ENCODE measurements at regions of chr2 and their contacts with region 1.

Region 1: DNA sequence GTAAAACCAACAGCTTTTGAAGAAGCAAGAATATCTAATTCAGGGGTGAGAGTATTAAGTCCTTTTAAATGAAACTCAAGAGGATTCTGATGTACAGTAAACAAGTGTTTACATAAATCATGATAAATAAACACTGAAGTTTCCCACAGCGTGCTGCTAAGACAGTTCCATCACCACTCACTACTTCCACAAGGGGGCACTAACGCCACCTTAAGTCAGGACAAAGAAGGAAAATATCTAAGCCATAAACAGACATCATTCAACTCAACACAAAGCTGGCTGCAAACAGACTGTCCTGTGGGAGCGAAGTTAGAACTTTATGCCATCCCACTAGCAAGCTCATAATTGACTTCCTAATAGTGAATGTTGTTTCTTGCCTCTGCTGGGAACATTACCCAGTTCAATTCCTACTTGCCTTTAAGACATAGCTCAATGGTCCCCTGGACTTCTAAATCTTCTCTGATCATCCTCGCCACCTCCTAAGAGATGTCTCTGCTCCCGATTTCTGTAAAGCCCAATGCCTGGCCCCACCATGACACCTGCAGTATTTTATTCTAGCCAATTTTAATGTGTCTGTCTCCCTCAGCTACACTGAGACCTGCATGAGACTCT is 36.5 kb downstream of the MRPL44 start:
- DNase-seq: peak; percentile 65 to 88
- ATAC-seq: peak; percentile 83 to 90
- H3K4me3 ChIP-seq: no peak overlapping the region
- H3K27ac ChIP-seq: peak overlapping the region in 1 of 2 experiments; percentile 2; a peak in 1 of 6 replicates
- H3K4me1 ChIP-seq: peaks cover 19% of the 10 kb centered on the region; the same call in 2 of the 3 replicates
- CTCF ChIP-seq: peak; percentile 85
- EP300 ChIP-seq: no peak
- POLR2A ChIP-seq: no peak
- RAD21 ChIP-seq: peak; percentile 92 to 94

Region 2: DNA sequence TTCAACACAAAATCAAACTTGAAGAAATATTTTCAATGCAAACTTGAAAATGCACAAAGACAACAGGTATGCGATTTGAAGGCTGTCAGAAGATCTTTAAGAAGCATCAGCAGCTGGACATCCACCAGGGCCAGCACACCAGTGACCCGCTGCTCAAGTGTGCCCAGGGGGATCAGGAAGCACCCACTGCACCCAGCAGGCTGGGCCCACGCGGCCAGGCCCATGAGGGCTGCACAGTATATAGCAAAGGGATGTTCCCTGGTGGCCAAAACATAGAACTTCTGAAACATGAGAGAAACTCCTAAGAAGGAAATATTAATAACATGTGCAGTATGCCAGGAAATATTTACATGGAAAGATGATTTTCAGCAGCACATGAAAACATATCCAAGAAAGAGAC is 73.6 kb before region 1 on chr2:
- CTCF ChIA-PET with region 1: no interaction called
- POLR2A ChIA-PET with region 1: no interaction called
- DNase-seq: no peak
- ATAC-seq: peak; percentile 24 to 78; a peak in 3 of 6 replicates
- H3K4me3 ChIP-seq: no peak overlapping the region
- H3K27ac ChIP-seq: no peak overlapping the region
- H3K4me1 ChIP-seq: 0 out of 3 replicates have a peak, but pooled peaks cover 6% of the 10 kb centered on the region
- CTCF ChIP-seq: no peak
- EP300 ChIP-seq: no peak
- POLR2A ChIP-seq: no peak
- RAD21 ChIP-seq: no peak

Region 3: GRCh38 chr2:224004105-224004695 is 10.5 kb after region 1 on chr2:
- CTCF ChIA-PET with region 1: interaction called, 54 read pairs
- POLR2A ChIA-PET with region 1: no interaction called
- DNase-seq: no peak
- ATAC-seq: no peak
- H3K4me3 ChIP-seq: no peak overlapping the region
- H3K27ac ChIP-seq: no peak overlapping the region
- H3K4me1 ChIP-seq: peaks cover 14% of the 10 kb centered on the region
- CTCF ChIP-seq: no peak
- EP300 ChIP-seq: no peak
- POLR2A ChIP-seq: no peak
- RAD21 ChIP-seq: no peak

Region 4: GRCh38 chr2:224033601-224034000 is 39.9 kb after region 1 on chr2:
- CTCF ChIA-PET with region 1: interaction called, 20 read pairs
- POLR2A ChIA-PET with region 1: interaction called, 12 read pairs
- DNase-seq: no peak
- ATAC-seq: no peak
- H3K4me3 ChIP-seq: no peak overlapping the region
- H3K27ac ChIP-seq: no peak overlapping the region
- H3K4me1 ChIP-seq: peaks cover 23% of the 10 kb centered on the region
- CTCF ChIP-seq: no peak
- EP300 ChIP-seq: no peak
- POLR2A ChIP-seq: no peak
- RAD21 ChIP-seq: no peak

Region 5: GRCh38 chr2:224062481-224063297 is 69.0 kb after region 1 on chr2:
- CTCF ChIA-PET with region 1: interaction called, 23 read pairs
- POLR2A ChIA-PET with region 1: no interaction called
- DNase-seq: no peak
- ATAC-seq: no peak
- H3K4me3 ChIP-seq: no peak overlapping the region
- H3K27ac ChIP-seq: no peak overlapping the region
- H3K4me1 ChIP-seq: no peaks in the 10 kb centered on the region
- CTCF ChIP-seq: no peak
- EP300 ChIP-seq: no peak
- POLR2A ChIP-seq: no peak
- RAD21 ChIP-seq: 0 out of 5 replicates have a peak, but pooled peaks of 1 of the 2 experiments have one; percentile 11

Region 6: DNA sequence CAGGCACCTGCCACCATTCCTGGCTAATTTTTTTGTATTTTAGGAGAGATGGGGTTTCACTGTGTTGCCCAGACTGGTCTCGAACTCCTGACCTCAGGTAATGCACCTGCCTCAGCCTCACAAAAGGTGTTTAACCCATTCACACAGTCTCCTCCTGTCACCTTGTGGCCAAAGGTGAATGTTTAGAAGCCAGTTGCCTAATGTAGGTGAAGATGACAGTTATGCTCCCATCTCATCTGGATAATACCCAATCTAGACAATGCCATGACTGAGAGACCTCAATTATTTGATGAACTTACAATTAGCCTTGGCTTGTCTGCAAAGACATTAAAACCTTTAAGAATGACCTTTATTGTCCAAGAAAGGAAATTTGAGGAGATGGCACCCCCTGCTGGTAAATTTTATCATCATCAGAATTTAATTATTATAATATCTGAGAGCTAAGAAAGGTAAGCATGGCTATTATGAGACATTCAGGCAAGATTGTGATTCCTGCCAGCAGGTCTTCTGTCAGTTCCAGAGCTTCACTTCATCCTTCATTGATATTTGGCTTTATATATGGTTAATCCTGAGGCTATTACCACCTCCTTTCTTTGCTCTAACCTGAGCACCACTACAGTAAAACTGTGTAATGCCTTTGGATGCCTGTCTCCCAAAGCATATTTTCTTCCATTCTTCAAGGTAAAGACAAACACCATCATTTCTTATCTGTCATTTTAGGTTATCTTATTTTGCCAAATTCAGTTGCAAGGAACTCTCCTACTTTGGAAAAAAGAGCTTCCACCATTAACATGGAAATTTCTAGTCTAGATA is 290.6 kb after region 1 on chr2:
- CTCF ChIA-PET with region 1: interaction called, 360 read pairs
- POLR2A ChIA-PET with region 1: no interaction called
- DNase-seq: peak; percentile 10 to 59
- ATAC-seq: peak; percentile 61 to 83
- H3K4me3 ChIP-seq: no peak overlapping the region
- H3K27ac ChIP-seq: peak overlapping the region in 1 of 2 experiments; percentile 18; a peak in 2 of 6 replicates
- H3K4me1 ChIP-seq: no peaks in the 10 kb centered on the region
- CTCF ChIP-seq: peak; percentile 100
- EP300 ChIP-seq: no peak
- POLR2A ChIP-seq: no peak
- RAD21 ChIP-seq: peak; percentile 91 to 99